ENCODE measurements at regions of chr11 and their contacts with region 1.

Region 1: GRCh38 chr11:65524741-65525545 is at the start of gene SCYL1:
- DNase-seq: peak; percentile 68 to 91 (median 80)
- ATAC-seq: peak; percentile 64 to 73
- H3K4me3 Mint-ChIP-seq: peak within 1 kb of the TSS; percentile 77 to 96 (median 88)
- H3K27ac Mint-ChIP-seq: peak within 1 kb of the TSS; percentile 90 to 99 (median 95)
- H3K4me1 Mint-ChIP-seq: peaks cover 36 to 66% (median 61%) of the 10 kb centered on the region in 4 donors
- H3K27me3 Mint-ChIP-seq: no peaks in the 10 kb centered on the region
- polyA plus RNA-seq, gene SCYL1: 23.2 to 41.5 (median 33.5) TPM

Region 2: GRCh38 chr11:65425105-65425970 is 99.6 kb before region 1 on chr11:
- POLR2A ChIA-PET with region 1: interaction called, 11 read pairs
- DNase-seq: peak; percentile 53 to 97 (median 88)
- ATAC-seq: peak; percentile 48 to 66
- H3K4me3 Mint-ChIP-seq: peak overlapping the region; percentile 88 to 98 (median 96)
- H3K27ac Mint-ChIP-seq: peak overlapping the region; percentile 94 to 100 (median 99)
- H3K4me1 Mint-ChIP-seq: peaks cover 49 to 88% (median 59%) of the 10 kb centered on the region in 4 donors
- H3K27me3 Mint-ChIP-seq: peaks cover 0 to 4% (median 0%) of the 10 kb centered on the region in 5 donors

Region 3: GRCh38 chr11:65454696-65455456 is 70.1 kb before region 1 on chr11:
- POLR2A ChIA-PET with region 1: no interaction called
- DNase-seq: peak; percentile 44 to 85 (median 70)
- ATAC-seq: peak; percentile 87 to 91
- H3K4me3 Mint-ChIP-seq: peak overlapping the region; percentile 81 to 96 (median 90)
- H3K27ac Mint-ChIP-seq: peak overlapping the region; percentile 57 to 95 (median 91)
- H3K4me1 Mint-ChIP-seq: peaks cover 3 to 35% (median 20%) of the 10 kb centered on the region in 4 donors
- H3K27me3 Mint-ChIP-seq: no peaks in the 10 kb centered on the region

Region 4: GRCh38 chr11:65471410-65471762 is 53.6 kb before region 1 on chr11:
- POLR2A ChIA-PET with region 1: no interaction called
- DNase-seq: peak in 4 of 10 donors; percentile 11 to 30 (median 22)
- ATAC-seq: peak in 1 of 2 donors; percentile 9
- H3K4me3 Mint-ChIP-seq: peak overlapping the region in 8 of 10 donors; percentile 11 to 90 (median 81)
- H3K27ac Mint-ChIP-seq: peak overlapping the region; percentile 93 to 99 (median 99)
- H3K4me1 Mint-ChIP-seq: peaks cover 5 to 42% (median 27%) of the 10 kb centered on the region in 4 donors
- H3K27me3 Mint-ChIP-seq: no peaks in the 10 kb centered on the region

Region 5: DNA sequence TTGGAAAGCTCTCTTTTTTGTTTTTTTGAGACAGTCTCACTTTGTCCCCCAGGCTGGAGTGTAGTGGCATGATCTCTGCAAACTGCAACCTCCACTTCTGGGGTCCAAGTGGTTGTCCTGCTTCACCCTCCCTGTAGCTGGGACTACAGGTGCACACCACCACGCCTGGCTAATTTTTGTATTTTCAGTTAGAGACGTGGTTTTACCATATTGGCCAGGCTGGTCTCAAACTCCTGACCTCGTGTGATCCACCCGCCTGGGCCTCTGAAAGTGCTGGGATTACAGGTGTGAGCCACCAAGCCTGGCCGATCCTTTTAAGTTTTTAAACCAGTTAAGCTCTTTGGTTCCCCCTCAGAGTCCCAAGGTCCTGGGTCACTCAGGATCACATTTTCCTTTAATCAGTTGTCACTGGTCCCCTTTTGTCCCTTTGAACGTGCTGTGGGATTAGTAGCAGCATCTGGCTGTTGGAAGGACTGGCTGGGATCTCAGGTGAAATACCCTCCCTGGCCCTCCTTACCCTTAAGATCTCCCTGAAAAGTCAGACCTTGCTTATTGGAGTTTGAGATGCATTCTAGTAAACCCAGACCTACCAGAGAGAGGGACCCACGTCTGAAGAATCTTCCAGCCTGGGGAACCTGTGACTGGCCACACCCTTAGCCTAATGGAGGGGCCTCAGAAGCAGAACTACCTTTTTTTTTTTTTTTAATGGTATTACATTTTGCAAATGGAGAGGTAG is 18.0 kb before region 1 on chr11:
- POLR2A ChIA-PET with region 1: interaction called, 55 read pairs
- DNase-seq: peak in 5 of 10 donors; percentile 50 to 57 (median 56)
- ATAC-seq: peak; percentile 36 to 55
- H3K4me3 Mint-ChIP-seq: no peak overlapping the region
- H3K27ac Mint-ChIP-seq: peak overlapping the region in 9 of 10 donors; percentile 67 to 95 (median 89)
- H3K4me1 Mint-ChIP-seq: peaks cover 38 to 66% (median 58%) of the 10 kb centered on the region in 4 donors
- H3K27me3 Mint-ChIP-seq: no peaks in the 10 kb centered on the region

Region 6: GRCh38 chr11:65633390-65634108 is 108.6 kb after region 1 on chr11:
- POLR2A ChIA-PET with region 1: no interaction called
- DNase-seq: no peak
- ATAC-seq: peak in 1 of 2 donors; percentile 42
- H3K4me3 Mint-ChIP-seq: peak overlapping the region in 6 of 10 donors; percentile 23 to 50 (median 31)
- H3K27ac Mint-ChIP-seq: peak overlapping the region; percentile 67 to 88 (median 86)
- H3K4me1 Mint-ChIP-seq: peaks cover 7 to 29% (median 25%) of the 10 kb centered on the region in 4 donors
- H3K27me3 Mint-ChIP-seq: no peaks in the 10 kb centered on the region